AG04449 (cell line): ENCODE measurements at regions of chr11 and their contacts with region 1.

Region 1: GRCh38 chr11:10792398-10792975 is 16.2 kb downstream of the EIF4G2 start:
- DNase-seq: no peak
- H3K4me3 ChIP-seq: no peak overlapping the region; the same call in 1 of the 2 replicates
- CTCF ChIP-seq: peak; percentile 99

Region 2: DNA sequence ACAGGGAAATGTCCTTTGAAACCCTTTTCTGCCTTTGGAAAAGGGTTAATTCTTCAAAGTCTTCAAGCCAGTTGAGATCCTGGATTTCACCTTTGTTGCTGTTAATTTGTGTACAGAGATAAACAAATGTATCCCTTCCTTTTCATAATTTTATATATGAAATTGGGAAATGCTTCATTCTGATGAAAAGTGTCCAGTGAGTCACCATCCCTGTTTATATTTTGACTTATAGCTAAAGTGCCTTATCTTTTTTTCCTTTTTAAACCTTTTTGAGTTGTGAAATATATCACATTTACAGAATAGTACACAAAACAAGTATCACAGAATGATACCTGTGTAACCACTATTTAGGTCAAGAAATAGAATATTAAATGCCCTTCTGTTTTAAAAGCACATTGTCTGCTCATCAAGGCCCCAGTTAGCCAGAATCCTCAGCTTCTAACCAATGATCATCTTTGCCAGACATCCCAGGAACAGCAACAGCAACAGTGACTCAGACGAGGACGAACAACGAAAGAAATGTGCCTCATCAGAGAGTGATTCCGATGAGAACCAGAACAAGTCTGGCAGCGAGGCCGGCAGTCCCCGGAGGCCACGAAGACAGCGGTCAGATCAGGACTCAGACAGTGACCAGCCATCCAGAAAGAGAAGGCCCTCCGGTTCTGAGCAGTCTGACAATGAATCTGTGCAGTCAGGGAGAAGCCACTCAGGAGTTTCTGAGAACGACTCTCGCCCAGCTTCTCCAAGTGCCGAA is 14.1 kb before region 1 on chr11:
- CTCF ChIA-PET with region 1: interaction called, 79 read pairs
- POLR2A ChIA-PET with region 1: no interaction called
- DNase-seq: peak; percentile 26
- H3K4me3 ChIP-seq: no peak overlapping the region
- CTCF ChIP-seq: no peak

Region 3: GRCh38 chr11:10906513-10906912 is 114.0 kb after region 1 on chr11:
- CTCF ChIA-PET with region 1: interaction called, 11 read pairs
- POLR2A ChIA-PET with region 1: interaction called, 4 read pairs
- DNase-seq: no peak
- H3K4me3 ChIP-seq: no peak overlapping the region
- CTCF ChIP-seq: peak; percentile 15

Region 4: DNA sequence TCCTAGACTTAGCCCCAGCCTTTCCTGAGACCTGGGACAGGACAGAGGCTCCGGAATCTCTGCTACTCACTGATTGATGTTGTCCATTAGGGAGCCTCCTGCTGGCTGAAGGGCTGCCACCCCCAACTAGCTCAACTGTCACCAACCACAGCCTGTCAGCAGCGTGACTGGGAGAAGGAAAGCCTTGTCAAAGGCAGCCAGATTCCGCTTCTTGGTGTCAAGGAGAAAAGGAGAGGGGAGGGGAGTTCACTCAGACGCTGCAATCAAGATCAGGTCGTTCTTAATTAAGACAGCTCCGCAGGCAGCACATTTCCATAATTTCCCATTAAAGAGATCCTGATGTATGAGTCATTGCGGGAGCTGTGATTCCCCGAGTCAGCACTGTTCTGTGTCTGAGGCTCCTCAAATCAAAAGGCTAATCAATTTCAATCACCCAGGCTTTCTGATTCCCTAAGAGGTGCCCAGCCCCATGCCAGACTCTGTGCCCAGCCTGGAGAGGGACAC is 218.2 kb after region 1 on chr11:
- CTCF ChIA-PET with region 1: interaction called, 16 read pairs
- POLR2A ChIA-PET with region 1: interaction called, 3 read pairs
- DNase-seq: no peak
- H3K4me3 ChIP-seq: no peak overlapping the region
- CTCF ChIP-seq: peak; percentile 42

Region 5: GRCh38 chr11:11028017-11028692 is 235.7 kb after region 1 on chr11:
- CTCF ChIA-PET with region 1: interaction called, 71 read pairs
- POLR2A ChIA-PET with region 1: no interaction called
- DNase-seq: no peak
- H3K4me3 ChIP-seq: no peak overlapping the region
- CTCF ChIP-seq: peak; percentile 68